ENCODE measurements at regions of chr4 and their contacts with region 1.

Region 1: DNA sequence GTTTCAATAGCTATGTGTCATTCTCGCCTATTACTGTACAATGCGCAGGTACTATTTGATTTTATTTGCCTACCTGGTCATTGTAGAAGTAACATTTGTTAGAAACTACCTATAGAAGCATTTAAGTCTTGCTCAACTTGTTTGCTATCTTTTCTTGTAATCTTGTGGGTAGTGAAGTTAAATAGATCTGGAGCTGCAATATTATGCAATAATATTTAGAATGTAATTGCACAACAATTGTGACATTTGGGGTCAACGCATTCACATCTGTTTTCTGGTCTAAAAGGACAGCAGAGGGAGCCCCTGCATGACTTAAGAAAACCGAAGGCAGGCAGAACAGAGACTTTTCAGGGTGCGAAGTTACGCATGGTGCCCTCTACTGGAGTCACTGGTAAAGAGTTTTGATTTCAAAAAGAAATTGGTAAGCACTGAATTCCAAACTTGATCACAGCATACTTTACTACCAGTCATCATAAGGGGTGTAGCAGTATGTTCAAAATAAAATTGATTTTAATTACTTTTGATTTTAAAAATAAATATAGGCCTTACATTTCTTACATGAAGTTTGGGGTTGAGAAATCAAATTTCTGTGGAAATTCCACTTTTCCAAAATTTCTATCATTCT is 503.2 kb upstream of the FAM241A start:
- DNase-seq: peak; percentile 53
- CTCF ChIP-seq: peak; percentile 75

Region 2: DNA sequence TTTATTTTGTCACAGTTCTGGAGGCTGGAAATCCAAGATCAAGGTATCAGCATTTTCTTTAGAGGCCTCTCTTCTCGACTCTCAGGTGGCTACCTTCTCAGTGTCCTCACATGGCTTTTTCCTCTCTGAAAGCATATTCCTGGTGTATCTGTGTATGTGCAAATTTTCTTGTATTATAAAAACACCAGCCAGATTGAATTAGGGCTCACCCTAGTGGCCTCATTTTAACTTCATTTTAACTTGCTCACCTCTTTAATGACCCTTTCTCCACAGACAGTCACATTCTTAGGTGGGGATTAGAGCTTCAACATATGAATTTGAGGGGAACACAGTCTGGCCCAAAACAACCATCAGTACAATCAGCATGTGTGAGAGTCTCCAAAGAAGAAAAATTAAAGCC is 39.2 kb before region 1 on chr4:
- CTCF ChIA-PET with region 1: no interaction called
- POLR2A ChIA-PET with region 1: no interaction called
- DNase-seq: no peak
- CTCF ChIP-seq: no peak

Region 3: DNA sequence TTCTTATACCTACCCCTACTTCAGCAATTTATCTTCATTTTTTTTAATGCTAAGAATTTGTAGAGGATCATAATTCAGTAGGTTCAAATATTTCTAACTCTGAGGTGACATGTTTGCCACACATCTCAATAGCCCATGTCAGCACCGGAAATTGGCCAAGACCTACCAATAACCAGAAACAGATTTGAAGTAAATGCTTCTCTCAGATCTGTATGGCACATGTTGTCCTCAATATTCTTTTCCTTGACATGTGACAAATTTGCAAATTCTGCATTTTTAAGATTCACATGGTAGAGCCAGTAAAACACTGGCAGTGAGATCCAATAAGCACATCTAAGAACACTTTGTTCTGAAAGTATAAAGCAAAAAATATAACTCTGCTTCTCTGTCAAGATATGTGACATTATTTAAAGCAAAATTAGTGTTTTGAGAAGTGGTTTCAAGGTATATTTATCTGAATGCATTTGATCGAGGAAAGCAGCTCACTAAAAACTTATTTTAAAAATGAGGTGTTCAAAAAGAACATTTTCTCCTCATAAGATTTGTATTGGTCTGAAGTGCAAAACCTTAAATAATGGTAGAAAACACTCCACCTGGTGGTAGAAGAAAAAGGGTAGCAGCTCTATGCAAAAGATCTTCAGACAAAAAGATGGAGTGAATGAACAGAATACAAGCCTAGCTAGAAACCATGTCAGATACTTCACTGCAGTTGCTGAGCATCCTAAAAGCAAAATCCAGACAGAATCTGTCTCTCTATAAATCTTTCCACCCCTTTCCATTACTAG is 10.7 kb before region 1 on chr4:
- CTCF ChIA-PET with region 1: interaction called, 12 read pairs
- POLR2A ChIA-PET with region 1: no interaction called
- DNase-seq: no peak
- CTCF ChIP-seq: peak; percentile 48

Region 4: GRCh38 chr4:111854494-111855087 is 212.5 kb after region 1 on chr4:
- CTCF ChIA-PET with region 1: interaction called, 15 read pairs
- POLR2A ChIA-PET with region 1: no interaction called
- DNase-seq: peak; percentile 7
- CTCF ChIP-seq: peak; percentile 63

Measured in GM10248 (cell line).